ENCODE measurements at regions of chr14 and their contacts with region 1.

Region 1: GRCh38 chr14:55026793-55027561 is at the starts of genes SOCS4 and WDHD1:
- DNase-seq: peak; percentile 97
- ATAC-seq: peak; percentile 95
- H3K4me3 Mint-ChIP-seq: peak within 1 kb of the TSS; percentile 98
- H3K27ac Mint-ChIP-seq: peak within 1 kb of the TSS; percentile 97
- H3K4me1 Mint-ChIP-seq: peaks cover 43% of the 10 kb centered on the region
- H3K27me3 Mint-ChIP-seq: no peaks in the 10 kb centered on the region
- CTCF ChIP-seq: no peak
- total RNA-seq, gene SOCS4: 19.8 to 20.8 TPM
- total RNA-seq, gene WDHD1: 59.8 to 68.4 TPM

Region 2: DNA sequence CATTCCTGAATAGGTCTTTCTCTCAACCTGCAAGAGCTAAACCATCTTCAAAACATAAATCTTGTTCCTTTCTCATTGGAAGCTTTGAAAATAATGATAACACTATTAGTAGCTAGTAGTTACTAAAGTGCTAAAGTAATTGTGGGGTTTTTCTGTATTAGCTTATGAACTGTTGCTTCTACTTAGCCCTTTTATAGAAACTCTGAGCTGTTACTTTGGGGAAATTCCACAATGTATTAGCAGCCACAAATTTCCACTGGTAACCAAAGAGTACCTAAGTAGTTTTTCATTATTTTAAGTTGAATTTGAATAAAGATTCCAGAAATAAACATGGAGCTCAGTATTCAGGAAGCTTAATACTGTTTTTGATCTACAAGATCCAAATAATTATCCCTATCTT is 18.1 kb after region 1 on chr14:
- CTCF ChIA-PET with region 1: interaction called, 6 read pairs
- POLR2A ChIA-PET with region 1: interaction called, 15 read pairs
- intact Hi-C with region 1: loop called (anchors 2 kb)
- DNase-seq: no peak
- ATAC-seq: no peak
- H3K4me3 Mint-ChIP-seq: no peak overlapping the region
- H3K27ac Mint-ChIP-seq: peak overlapping the region; percentile 46
- H3K4me1 Mint-ChIP-seq: peaks cover 10% of the 10 kb centered on the region
- H3K27me3 Mint-ChIP-seq: no peaks in the 10 kb centered on the region
- CTCF ChIP-seq: no peak

Region 3: DNA sequence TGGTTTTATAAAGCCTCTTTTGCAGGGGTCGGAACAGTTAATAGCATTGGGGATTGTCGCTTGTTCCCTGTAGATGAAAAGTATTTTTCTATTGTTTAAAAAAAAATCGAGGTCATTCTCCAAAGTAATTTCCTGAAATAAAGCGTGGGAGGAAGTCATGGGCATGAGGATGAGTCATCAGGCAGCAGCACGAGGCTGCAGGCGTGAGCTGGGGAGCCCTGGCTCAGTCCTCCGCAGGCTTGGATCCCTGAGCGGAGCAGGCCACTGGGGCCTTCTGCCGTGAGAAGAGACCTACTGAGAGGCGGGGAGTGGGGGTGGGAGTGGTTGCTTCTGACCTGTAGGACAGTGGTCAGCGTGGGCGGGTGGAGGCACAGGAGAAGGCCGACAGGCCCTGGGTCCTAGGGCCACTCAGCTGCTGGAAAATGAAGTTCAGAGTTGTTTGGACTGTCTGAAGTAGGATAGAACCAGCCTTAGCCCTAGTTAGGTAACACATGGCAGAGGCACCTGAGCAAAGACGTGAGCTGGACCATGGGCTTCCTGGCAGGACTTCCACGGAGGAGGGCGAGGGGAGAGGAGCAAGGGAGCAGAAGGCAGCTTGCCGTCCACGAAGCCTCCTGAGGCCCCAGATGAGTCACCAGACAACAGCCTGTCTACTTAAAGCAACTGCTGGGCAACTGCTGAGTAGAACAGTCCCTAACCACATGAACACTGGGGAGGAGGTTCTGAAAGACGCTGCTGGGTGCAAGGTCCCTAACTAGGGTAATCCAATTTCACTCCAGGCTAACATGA is 81.0 kb after region 1 on chr14:
- CTCF ChIA-PET with region 1: no interaction called
- POLR2A ChIA-PET with region 1: no interaction called
- intact Hi-C with region 1: no loop called
- DNase-seq: peak; percentile 60
- ATAC-seq: peak; percentile 86
- H3K4me3 Mint-ChIP-seq: no peak overlapping the region
- H3K27ac Mint-ChIP-seq: peak overlapping the region; percentile 77
- H3K4me1 Mint-ChIP-seq: peaks cover 26% of the 10 kb centered on the region
- H3K27me3 Mint-ChIP-seq: no peaks in the 10 kb centered on the region
- CTCF ChIP-seq: no peak

Measured in activated CD8-positive, alpha-beta T cell treated with anti-CD3 and anti-CD28 coated beads for 36 hours (primary cell).